HCT116 (cell line): ENCODE measurements at regions of chr7 and their contacts with region 1.

Region 1: DNA sequence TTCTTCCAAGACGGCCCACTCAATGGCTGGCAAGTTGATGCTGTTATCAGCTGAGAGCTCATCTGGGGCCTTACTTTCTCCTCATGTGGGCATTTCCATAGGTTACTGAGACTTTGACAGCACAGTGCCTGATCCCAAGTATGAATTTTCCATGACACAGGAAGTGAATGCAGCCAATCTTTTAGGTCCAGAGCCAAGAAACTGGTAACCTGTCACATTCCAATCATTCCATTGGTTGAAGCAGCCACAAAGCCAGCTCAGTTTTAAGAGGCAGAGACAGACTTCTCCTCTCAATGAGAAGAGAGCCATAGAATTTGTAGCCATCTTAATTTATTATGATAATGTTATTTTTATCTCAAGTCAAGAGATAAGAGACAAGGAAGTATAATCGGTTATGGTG is 775.5 kb downstream of the CNTNAP2 start:
- DNase-seq: no peak
- ATAC-seq: no peak
- H3K4me3 ChIP-seq: no peak overlapping the region
- H3K27ac ChIP-seq: no peak overlapping the region
- H3K4me1 ChIP-seq: no peaks in the 10 kb centered on the region
- H3K27me3 ChIP-seq: no peaks in the 10 kb centered on the region
- CTCF ChIP-seq: no peak
- POLR2A ChIP-seq: no peak
- RAD21 ChIP-seq: no peak

Region 2: DNA sequence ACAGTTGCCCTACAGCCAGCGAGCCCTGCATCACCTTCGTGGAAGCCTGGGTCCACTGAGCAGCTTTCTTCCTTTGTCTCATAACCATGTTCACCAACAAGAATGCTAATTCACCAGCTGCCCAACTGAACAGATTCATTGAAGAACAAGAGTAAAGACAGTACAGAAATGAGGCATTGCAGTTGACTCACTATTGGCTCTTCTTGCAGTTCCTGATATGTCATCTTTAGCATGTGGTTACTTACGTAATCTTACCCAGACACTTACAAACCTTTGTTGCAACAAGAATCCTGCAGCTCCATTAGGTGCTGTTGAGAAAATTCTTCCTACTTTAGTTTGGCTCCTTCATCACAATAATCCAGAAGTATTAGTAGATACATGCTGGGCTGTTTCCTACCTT is 1882.3 kb before region 1 on chr7:
- CTCF ChIA-PET with region 1: no interaction called
- POLR2A ChIA-PET with region 1: no interaction called
- RAD21 ChIA-PET with region 1: no interaction called
- intact Hi-C with region 1: no loop called
- DNase-seq: no peak
- ATAC-seq: no peak
- H3K4me3 ChIP-seq: no peak overlapping the region
- H3K27ac ChIP-seq: no peak overlapping the region
- H3K4me1 ChIP-seq: no peaks in the 10 kb centered on the region
- H3K27me3 ChIP-seq: no peaks in the 10 kb centered on the region
- CTCF ChIP-seq: no peak
- POLR2A ChIP-seq: no peak
- RAD21 ChIP-seq: no peak

Region 3: DNA sequence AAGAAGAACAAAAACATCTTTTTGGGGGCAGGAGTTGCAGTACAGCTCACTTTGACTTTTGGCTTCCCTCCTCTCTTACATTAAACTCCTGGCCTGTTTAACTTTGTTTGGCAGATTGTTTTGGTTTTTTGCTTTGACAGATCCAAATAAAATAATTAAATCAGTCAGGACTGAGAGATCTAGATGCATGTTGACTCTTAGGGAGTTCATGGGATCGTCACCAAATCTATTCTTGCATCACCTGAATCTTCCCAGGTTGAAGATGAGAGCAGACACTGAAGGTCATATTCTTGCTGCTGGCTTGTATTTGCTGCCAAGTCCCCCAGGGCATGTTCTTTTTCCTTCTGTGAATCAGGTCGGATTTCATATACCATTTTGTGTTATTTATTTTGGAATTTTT is 16.2 kb before region 1 on chr7:
- CTCF ChIA-PET with region 1: no interaction called
- POLR2A ChIA-PET with region 1: no interaction called
- RAD21 ChIA-PET with region 1: no interaction called
- intact Hi-C with region 1: no loop called
- DNase-seq: no peak
- ATAC-seq: no peak
- H3K4me3 ChIP-seq: no peak overlapping the region
- H3K27ac ChIP-seq: no peak overlapping the region
- H3K4me1 ChIP-seq: no peaks in the 10 kb centered on the region
- H3K27me3 ChIP-seq: no peaks in the 10 kb centered on the region
- CTCF ChIP-seq: no peak
- POLR2A ChIP-seq: no peak
- RAD21 ChIP-seq: no peak

Region 4: DNA sequence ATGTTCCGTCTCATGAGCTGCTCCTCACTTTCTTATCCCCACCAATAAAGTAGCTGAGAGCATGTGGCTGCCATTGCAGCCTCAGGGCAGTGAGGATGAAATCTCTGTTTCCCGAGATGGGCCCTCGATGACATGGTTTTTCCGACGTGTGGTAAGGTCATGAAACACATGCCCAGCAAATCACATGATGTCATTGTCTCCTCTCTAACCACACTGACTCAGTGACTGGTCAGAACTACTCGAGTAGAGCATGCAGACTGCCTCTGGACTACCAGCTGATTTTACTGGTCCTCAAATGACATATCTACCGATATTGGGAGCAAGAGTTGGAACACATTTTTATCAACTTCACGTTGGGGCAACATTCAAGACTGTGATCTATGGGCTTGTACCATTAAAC is 10.6 kb after region 1 on chr7:
- CTCF ChIA-PET with region 1: no interaction called
- POLR2A ChIA-PET with region 1: no interaction called
- RAD21 ChIA-PET with region 1: no interaction called
- intact Hi-C with region 1: no loop called
- DNase-seq: no peak
- ATAC-seq: no peak
- H3K4me3 ChIP-seq: no peak overlapping the region
- H3K27ac ChIP-seq: no peak overlapping the region
- H3K4me1 ChIP-seq: no peaks in the 10 kb centered on the region
- H3K27me3 ChIP-seq: no peaks in the 10 kb centered on the region
- CTCF ChIP-seq: no peak
- POLR2A ChIP-seq: no peak
- RAD21 ChIP-seq: no peak

Region 5: DNA sequence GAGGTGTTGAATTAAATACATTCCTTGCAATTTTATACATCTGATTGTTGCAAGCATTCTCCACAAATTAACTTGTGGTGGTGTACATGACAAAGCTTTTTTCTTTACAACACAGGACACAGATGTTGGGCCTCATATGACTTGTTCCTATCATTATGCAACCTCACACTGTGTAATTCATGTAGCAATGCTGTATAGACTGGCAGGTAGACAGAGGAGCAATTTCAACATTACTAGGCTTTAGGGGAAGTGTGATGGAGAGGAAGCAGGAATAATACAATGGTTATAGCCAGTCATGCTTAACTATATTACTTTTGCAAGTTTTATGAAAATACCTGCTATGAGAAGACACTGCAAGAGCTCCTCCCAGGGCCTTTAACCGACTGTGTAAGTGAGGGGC is 56.6 kb after region 1 on chr7:
- CTCF ChIA-PET with region 1: no interaction called
- POLR2A ChIA-PET with region 1: no interaction called
- RAD21 ChIA-PET with region 1: no interaction called
- intact Hi-C with region 1: loop called (anchors 10 kb)
- DNase-seq: no peak
- ATAC-seq: no peak
- H3K4me3 ChIP-seq: no peak overlapping the region
- H3K27ac ChIP-seq: no peak overlapping the region
- H3K4me1 ChIP-seq: no peaks in the 10 kb centered on the region
- H3K27me3 ChIP-seq: no peaks in the 10 kb centered on the region
- CTCF ChIP-seq: no peak
- POLR2A ChIP-seq: no peak
- RAD21 ChIP-seq: no peak